GM12878 (cell line): ENCODE measurements at regions of chr10 and their contacts with region 1.

Region 1: GRCh38 chr10:89665302-89665701 is 20.3 kb upstream of the PANK1 start:
- DNase-seq: no peak
- ATAC-seq: no peak
- H3K4me3 ChIP-seq: no peak overlapping the region
- H3K27ac ChIP-seq: no peak overlapping the region
- H3K4me1 ChIP-seq: no peaks in the 10 kb centered on the region
- H3K27me3 ChIP-seq: no peaks in the 10 kb centered on the region
- CTCF ChIP-seq: no peak
- EP300 ChIP-seq: no peak
- POLR2A ChIP-seq: no peak
- RAD21 ChIP-seq: no peak

Region 2: DNA sequence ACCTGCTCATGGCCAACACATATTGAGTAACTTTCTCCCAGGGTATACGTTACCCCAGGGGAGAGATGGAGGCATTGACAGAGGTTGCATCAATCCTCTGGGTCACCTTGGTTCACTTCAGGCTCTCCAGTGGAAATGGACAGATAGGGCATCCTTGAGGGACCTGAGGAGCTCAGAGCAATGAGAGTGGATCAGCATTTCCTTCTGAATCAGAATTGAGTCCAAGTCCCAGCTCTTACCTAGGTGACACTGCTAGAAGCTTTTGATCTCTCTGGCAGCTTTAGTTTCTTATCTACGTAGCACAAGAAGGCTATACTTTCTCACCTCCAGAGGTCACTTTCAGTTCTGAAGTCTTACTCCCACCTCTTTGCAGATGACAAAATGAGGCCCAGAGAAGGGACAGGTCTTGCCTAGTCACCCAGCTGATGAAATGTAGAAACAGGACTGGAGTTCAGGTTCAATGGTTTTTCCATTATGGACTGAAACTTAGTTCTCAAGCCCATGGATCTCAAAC is 55.4 kb before region 1 on chr10:
- CTCF ChIA-PET with region 1: interaction called, 13 read pairs
- POLR2A ChIA-PET with region 1: no interaction called
- RAD21 ChIA-PET with region 1: interaction called, 4 read pairs
- SMC1A ChIA-PET with region 1: no interaction called
- in situ Hi-C with region 1: no loop called
- intact Hi-C with region 1: no loop called
- DNase-seq: peak; percentile 37
- ATAC-seq: peak; percentile 98
- H3K4me3 ChIP-seq: no peak overlapping the region
- H3K27ac ChIP-seq: no peak overlapping the region; the same call in 1 of the 2 replicates
- H3K4me1 ChIP-seq: peaks cover 12% of the 10 kb centered on the region
- H3K27me3 ChIP-seq: no peaks in the 10 kb centered on the region
- CTCF ChIP-seq: peak; percentile 26 to 29 (median 26); a peak in 5 of 6 replicates
- EP300 ChIP-seq: 0 out of 4 replicates have a peak, but pooled peaks of 1 of the 2 experiments have one; percentile 24
- POLR2A ChIP-seq: no peak
- RAD21 ChIP-seq: peak; percentile 67

Region 3: GRCh38 chr10:89710753-89711152 is 45.5 kb after region 1 on chr10:
- CTCF ChIA-PET with region 1: no interaction called
- POLR2A ChIA-PET with region 1: no interaction called
- RAD21 ChIA-PET with region 1: no interaction called
- SMC1A ChIA-PET with region 1: no interaction called
- in situ Hi-C with region 1: no loop called
- intact Hi-C with region 1: no loop called
- DNase-seq: no peak
- ATAC-seq: no peak
- H3K4me3 ChIP-seq: no peak overlapping the region
- H3K27ac ChIP-seq: no peak overlapping the region
- H3K4me1 ChIP-seq: no peaks in the 10 kb centered on the region
- H3K27me3 ChIP-seq: no peaks in the 10 kb centered on the region
- CTCF ChIP-seq: no peak
- EP300 ChIP-seq: no peak
- POLR2A ChIP-seq: no peak
- RAD21 ChIP-seq: no peak